MCF 10A (cell line): ENCODE measurements at regions of chr12 and their contacts with region 1.

Region 1: DNA sequence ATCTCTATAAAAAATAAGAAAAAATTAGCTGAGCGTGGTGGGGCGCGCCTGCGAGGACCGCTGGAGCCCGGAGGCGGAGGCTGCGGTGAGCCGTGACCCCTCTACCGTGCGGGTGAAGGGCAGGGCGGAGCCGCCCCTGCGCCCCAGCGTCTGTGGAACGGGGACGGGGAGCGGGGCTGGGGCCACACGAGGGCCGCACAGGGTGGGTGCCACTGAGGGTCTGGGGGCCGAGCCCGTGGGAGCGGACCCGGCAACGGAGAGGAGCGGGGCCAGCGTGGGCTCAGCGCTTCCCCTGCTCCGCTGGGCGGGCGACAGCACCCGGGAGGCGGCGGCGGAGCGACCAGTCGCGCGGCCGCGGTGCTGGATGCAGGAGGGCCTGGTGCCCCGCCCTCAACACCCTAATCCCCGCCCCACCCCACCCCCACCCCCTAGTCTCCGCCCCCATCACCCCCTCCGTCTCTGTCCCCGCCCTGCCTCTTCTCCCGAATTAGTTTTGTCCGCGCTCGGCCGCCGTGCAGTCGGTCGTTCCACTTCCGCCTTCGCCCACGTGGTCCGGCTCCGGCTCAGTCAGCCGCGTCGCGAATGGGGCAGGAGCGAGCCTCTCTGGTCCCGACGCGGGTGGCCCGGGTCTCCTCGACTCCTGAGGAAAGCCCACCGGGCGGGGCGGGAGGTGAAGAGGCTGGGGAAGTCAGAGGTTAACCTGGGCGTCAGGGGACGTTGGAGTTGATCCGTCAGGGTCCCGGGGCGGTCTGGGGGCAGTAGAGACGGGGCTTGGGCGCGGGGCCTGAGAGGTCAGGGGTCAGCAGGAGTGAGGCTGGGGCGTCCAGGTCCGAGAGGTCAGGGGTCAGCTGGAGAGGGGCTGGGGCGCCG is at the start of gene PUS1:
- DNase-seq: peak; percentile 94
- H3K4me3 Mint-ChIP-seq: peak within 1 kb of the TSS; percentile 93
- H3K27ac Mint-ChIP-seq: peak within 1 kb of the TSS; percentile 92
- H3K4me1 Mint-ChIP-seq: no peaks in the 10 kb centered on the region
- H3K27me3 Mint-ChIP-seq: no peaks in the 10 kb centered on the region
- CTCF ChIP-seq: no peak
- total RNA-seq, gene PUS1: 44.1 and 72.3 TPM in 2 replicates

Region 2: GRCh38 chr12:131860562-131861291 is 68.2 kb before region 1 on chr12:
- CTCF ChIA-PET with region 1: no interaction called
- POLR2A ChIA-PET with region 1: interaction called, 3 read pairs
- intact Hi-C with region 1: loop called (anchors 2 kb)
- DNase-seq: peak; percentile 93
- H3K4me3 Mint-ChIP-seq: peak overlapping the region; percentile 59
- H3K27ac Mint-ChIP-seq: peak overlapping the region; percentile 96
- H3K4me1 Mint-ChIP-seq: peaks cover 39% of the 10 kb centered on the region
- H3K27me3 Mint-ChIP-seq: peaks cover 25% of the 10 kb centered on the region
- CTCF ChIP-seq: no peak

Region 3: DNA sequence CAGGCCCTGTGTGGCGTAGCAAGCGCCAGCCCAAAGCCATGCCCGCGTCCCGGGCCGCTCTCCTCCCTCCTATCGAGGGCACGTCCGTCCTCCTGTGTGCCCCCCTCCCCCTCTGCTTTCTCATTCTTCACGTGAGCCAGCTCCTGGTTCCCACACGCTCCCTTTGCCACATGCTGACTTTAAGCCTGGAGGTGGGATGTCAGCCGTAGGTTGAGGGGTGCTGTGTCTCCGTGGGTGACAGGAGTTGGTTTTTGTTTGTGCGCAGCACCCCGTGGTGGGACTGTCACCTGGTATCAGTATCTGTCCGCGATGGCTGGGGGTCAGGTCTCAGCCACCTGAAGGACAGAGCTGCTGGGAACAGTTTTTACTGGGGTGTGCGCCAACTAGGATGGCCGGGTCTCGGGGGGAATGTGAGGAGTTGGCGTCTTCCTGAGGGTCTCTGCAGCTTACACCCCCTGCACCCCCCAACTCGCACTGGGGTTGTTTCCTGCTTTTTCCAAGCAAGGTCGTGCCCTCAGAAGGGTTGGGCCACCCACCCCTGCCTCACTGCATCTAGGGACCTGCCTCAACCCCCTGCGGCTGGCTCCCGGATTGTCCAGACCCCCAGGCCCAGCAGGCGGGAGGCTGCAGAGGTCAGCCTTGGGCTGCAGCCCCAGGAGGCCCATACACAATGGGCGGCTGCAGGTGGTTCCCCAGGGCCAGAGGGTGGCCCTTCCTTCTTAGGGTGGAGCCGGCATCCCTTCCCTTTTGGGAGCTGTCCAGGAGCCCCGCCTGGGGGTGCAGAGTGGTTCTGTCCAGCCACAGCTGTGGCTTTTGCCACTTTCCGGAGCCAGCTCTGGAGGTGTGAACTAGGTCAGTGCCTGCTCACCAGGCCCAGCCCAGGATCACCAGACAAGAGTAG is 27.3 kb before region 1 on chr12:
- CTCF ChIA-PET with region 1: interaction called, 3 read pairs
- POLR2A ChIA-PET with region 1: interaction called, 11 read pairs
- intact Hi-C with region 1: loop called (anchors 2 kb)
- DNase-seq: peak; percentile 68
- H3K4me3 Mint-ChIP-seq: no peak overlapping the region
- H3K27ac Mint-ChIP-seq: peak overlapping the region; percentile 46
- H3K4me1 Mint-ChIP-seq: peaks cover 19% of the 10 kb centered on the region
- H3K27me3 Mint-ChIP-seq: no peaks in the 10 kb centered on the region
- CTCF ChIP-seq: no peak

Region 4: DNA sequence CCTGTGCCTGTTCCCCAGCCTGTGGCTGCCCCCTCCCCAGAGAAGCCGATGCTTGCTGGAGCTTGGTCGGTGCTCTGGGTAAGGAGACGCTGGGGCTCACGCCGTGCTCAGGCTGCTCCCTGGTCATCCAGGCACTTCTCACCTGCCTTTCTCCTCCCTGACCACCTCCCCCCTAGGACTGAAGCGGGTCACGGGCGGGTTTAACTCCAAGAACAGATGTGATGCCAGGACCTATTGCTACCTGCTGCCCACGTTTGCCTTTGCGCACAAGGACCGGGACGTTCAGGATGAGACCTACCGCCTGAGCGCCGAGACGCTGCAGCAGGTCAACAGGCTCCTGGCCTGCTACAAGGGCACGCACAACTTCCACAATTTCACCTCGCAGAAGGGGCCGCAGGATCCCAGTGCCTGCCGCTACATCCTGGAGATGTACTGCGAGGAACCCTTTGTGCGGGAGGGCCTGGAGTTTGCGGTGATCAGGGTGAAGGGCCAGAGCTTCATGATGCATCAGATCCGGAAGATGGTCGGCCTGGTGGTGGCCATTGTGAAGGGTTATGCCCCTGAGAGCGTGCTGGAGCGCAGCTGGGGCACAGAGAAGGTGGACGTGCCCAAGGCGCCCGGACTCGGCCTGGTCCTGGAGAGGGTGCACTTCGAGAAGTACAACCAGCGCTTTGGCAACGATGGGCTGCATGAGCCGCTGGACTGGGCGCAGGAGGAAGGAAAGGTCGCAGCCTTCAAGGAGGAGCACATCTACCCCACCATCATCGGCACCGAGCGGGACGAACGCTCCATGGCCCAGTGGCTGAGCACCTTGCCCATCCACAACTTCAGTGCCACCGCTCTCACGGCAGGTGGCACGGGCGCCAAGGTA is 12.4 kb after region 1 on chr12:
- CTCF ChIA-PET with region 1: interaction called, 4 read pairs
- POLR2A ChIA-PET with region 1: interaction called, 29 read pairs
- intact Hi-C with region 1: no loop called
- DNase-seq: no peak
- H3K4me3 Mint-ChIP-seq: no peak overlapping the region
- H3K27ac Mint-ChIP-seq: peak overlapping the region; percentile 92
- H3K4me1 Mint-ChIP-seq: peaks cover 12% of the 10 kb centered on the region
- H3K27me3 Mint-ChIP-seq: no peaks in the 10 kb centered on the region
- CTCF ChIP-seq: no peak

Region 5: GRCh38 chr12:131949431-131950181 is 20.7 kb after region 1 on chr12 and contains the start of gene EP400:
- CTCF ChIA-PET with region 1: interaction called, 4 read pairs
- POLR2A ChIA-PET with region 1: interaction called, 13 read pairs
- intact Hi-C with region 1: no loop called
- DNase-seq: peak; percentile 94
- H3K4me3 Mint-ChIP-seq: peak within 1 kb of the TSS; percentile 75
- H3K27ac Mint-ChIP-seq: peak within 1 kb of the TSS; percentile 70
- H3K4me1 Mint-ChIP-seq: peaks cover 9% of the 10 kb centered on the region
- H3K27me3 Mint-ChIP-seq: no peaks in the 10 kb centered on the region
- CTCF ChIP-seq: peak; percentile 54
- total RNA-seq, gene EP400: 52.4 and 54.8 TPM in 2 replicates